Activated T-helper 2 cell treated with anti-CD3 and anti-CD28 coated beads, Interferon-gamma antibody, Interleukin-2, Interleukin-4, amounts not matched to agents 10 μg/mL and 5 μg/mL and 100 μg/mL, durations not matched to agents 14 hours and 24 hours and 36 hours (primary cell): ENCODE measurements at regions of chr12 and their contacts with region 1.

Region 1: DNA sequence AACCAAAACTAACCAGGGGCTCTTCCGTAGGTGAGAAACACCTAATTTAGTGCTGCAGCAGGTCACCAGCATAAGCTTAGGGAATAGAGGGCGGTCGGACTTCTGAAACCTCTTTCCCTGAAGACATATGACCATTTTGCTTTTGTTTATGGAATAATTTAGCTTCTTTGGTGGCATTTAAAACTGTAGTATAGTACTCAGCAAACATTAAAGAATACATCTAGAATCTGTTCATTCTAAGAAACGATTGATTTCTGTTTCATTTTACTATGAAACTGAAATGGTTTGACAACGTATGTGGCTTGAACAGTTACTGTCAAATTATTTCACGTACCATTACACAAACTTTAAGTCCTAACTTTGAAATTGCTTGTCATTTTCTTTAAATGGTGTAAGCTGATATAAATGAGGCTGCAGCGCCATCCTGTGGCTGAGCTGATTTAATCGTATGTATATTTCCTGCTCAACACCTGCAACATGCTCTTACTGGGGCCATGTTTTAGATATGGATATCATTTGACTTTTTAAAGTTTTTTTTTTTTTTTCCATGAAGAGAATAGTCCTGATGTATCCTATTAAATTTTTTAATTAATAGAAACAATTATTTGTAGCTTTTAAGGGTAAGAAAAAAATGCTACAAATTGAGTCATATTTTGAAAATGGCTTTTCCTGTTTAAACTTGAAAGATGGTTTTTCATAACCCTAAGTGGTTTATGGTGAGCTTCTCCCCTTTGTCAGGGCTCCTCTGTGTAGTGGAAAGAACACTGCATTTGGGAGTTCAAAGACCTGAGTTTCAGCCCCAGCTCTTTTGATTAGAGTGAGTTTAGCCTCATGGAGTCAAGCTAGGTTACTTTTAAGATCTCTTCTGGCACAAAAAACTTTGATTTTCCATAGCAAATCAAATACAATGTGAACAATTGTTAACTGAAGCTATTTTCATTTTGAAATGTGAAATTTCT is 27.4 kb downstream of the CFAP54 start:
- DNase-seq: peak; percentile 77
- H3K4me3 Mint-ChIP-seq: no peak overlapping the region
- H3K27ac Mint-ChIP-seq: peak overlapping the region; percentile 68
- H3K4me1 Mint-ChIP-seq: peaks cover 15% of the 10 kb centered on the region
- H3K27me3 Mint-ChIP-seq: peaks cover 1% of the 10 kb centered on the region

Region 2: GRCh38 chr12:96035278-96036236 is 481.2 kb before region 1 on chr12 and contains the start of gene LTA4H:
- intact Hi-C with region 1: loop called (anchors 1 kb)
- DNase-seq: peak; percentile 94
- H3K4me3 Mint-ChIP-seq: no peak within 1 kb of the TSS
- H3K27ac Mint-ChIP-seq: no peak within 1 kb of the TSS
- H3K4me1 Mint-ChIP-seq: peaks cover 8% of the 10 kb centered on the region
- H3K27me3 Mint-ChIP-seq: no peaks in the 10 kb centered on the region
- total RNA-seq, gene LTA4H: 63.6 and 65.2 TPM in 2 replicates

Region 3: DNA sequence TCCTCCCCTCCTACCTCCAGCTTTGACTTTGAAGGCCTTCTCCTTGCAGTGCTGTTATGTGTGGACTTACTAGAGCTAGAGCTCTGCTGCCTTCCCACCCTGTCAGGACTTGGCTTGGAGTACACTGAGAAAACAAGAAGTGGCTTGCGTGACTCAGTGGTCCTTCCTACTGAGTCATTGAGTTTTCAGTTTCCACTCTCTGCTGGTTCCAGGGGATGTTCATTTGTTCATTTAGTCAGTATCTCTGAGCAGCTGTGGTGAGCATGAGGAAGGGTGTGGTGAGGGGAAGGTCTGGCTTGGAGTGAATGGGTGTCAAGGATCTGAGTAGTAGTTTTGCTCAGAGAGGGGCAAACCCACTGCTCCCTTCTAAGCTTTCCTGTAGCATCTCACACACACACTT is 339.7 kb before region 1 on chr12:
- intact Hi-C with region 1: no loop called
- DNase-seq: peak; percentile 60
- H3K4me3 Mint-ChIP-seq: peak overlapping the region; percentile 11
- H3K27ac Mint-ChIP-seq: peak overlapping the region; percentile 53
- H3K4me1 Mint-ChIP-seq: peaks cover 18% of the 10 kb centered on the region
- H3K27me3 Mint-ChIP-seq: no peaks in the 10 kb centered on the region

Region 4: DNA sequence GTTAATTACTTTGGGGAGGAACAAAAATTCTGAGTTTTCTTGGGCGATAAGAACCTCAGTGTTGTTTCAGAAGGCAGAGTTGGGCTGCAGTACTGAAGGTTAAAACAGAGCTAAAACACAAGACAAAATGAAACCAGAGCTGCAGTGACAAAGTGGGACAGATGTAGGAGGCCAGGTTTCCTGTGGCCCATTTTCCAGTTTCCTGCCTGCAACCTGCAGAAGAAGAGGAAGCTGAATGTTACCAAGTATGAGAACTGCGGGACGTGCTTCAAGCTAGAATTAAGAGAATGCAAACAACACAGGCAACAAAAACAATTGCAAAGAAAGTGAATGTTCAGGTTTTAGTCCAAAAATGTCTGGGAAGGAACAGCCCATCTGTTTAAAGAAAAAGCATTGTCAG is 304.8 kb before region 1 on chr12:
- intact Hi-C with region 1: loop called (anchors 1 kb)
- DNase-seq: no peak
- H3K4me3 Mint-ChIP-seq: peak overlapping the region; percentile 10
- H3K27ac Mint-ChIP-seq: peak overlapping the region; percentile 48
- H3K4me1 Mint-ChIP-seq: peaks cover 72% of the 10 kb centered on the region
- H3K27me3 Mint-ChIP-seq: no peaks in the 10 kb centered on the region

Region 5: DNA sequence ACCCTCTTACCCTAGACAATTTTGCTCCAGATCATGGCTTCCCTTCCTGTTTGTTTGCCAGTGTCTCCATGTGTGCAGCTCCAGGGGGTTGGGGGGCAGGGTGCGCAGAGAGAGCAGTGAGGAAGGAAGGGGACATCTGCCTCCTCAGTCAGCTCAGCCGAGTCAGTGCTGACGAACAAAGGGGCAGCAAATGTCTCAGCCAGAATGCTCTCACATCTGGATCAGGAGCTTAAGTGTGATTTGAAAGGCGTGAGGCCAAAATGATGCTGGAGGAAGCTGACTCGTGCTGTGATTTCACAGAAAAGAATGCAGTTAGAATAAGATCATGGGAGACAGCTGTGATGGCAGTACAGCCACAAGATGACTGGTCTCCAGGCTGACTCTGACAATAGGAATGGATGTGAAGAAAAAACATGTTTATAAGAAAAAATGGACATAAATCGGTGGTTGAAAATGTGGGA is 89.5 kb before region 1 on chr12:
- intact Hi-C with region 1: loop called (anchors 1 kb)
- DNase-seq: no peak
- H3K4me3 Mint-ChIP-seq: peak overlapping the region; percentile 58
- H3K27ac Mint-ChIP-seq: peak overlapping the region; percentile 88
- H3K4me1 Mint-ChIP-seq: peaks cover 52% of the 10 kb centered on the region
- H3K27me3 Mint-ChIP-seq: no peaks in the 10 kb centered on the region

Region 6: DNA sequence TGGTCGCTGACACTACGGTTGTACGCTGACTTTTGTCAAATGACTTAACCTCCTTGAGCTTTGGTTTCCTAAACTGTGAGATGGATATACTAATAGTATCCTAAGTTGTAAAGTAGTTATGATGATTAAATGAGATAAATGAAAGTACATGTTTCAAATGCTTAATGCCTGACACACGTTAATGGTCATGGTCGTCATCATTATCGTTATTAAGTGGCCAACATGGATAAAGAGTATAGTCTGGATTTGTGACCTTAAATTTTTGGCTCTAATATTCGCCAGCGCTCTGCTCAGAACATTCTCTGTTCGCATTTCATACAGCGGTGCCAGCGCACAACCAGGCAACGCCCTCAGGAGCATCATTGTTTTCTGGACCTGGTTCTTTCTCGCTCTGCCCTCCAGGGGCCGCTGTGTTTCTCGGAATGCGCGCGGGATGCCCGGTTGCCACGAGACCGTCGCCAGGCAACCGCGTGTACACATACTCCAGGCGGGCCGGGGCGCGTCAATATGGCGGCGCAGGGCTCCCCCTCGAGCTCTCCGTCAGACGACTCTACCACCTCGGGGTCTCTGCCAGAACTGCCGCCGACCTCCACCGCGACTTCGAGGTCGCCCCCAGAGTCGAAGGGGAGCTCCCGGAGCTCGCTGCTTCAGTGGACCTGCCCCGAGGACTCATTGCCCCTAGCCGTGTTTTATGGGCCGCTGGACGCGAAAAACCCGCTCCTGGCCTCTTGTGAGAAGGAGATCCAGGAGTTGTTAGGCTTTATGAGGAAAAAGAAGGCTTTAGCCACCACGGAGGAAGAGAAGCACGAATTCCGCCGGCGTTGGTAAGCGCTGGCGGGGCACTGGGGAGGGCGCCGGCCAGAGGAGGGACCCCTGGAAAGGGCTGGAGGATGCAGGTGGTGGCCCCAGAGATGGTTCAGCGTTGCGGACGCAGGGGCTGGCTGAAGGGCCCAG is 27.4 kb before region 1 on chr12 and contains the start of gene CFAP54:
- intact Hi-C with region 1: loop called (anchors 1 kb)
- DNase-seq: peak; percentile 92
- H3K4me3 Mint-ChIP-seq: peak within 1 kb of the TSS; percentile 84
- H3K27ac Mint-ChIP-seq: peak within 1 kb of the TSS; percentile 48
- H3K4me1 Mint-ChIP-seq: peaks cover 31% of the 10 kb centered on the region
- H3K27me3 Mint-ChIP-seq: peaks cover 25% of the 10 kb centered on the region
- total RNA-seq, gene CFAP54: 0.14 and 0.23 TPM in 2 replicates